Head of caudate nucleus (tissue), 42 donors: ENCODE measurements at regions of chr12 and their contacts with region 1.

Region 1: GRCh38 chr12:50763639-50764285 is at the start of gene ATF1:
- DNase-seq: peak; percentile 81 to 97 (median 93)

Region 2: GRCh38 chr12:50504798-50505385 is 258.9 kb before region 1 on chr12 and contains the start of gene DIP2B:
- intact Hi-C with region 1: loop called (anchors 2 kb)
- DNase-seq: peak; percentile 92 to 99 (median 96)

Region 3: GRCh38 chr12:50992819-50993218 is 229.1 kb after region 1 on chr12:
- intact Hi-C with region 1: loop called (anchors 10 kb)
- DNase-seq: peak in 32 of 42 donors; percentile 11 to 79 (median 45)

Region 4: DNA sequence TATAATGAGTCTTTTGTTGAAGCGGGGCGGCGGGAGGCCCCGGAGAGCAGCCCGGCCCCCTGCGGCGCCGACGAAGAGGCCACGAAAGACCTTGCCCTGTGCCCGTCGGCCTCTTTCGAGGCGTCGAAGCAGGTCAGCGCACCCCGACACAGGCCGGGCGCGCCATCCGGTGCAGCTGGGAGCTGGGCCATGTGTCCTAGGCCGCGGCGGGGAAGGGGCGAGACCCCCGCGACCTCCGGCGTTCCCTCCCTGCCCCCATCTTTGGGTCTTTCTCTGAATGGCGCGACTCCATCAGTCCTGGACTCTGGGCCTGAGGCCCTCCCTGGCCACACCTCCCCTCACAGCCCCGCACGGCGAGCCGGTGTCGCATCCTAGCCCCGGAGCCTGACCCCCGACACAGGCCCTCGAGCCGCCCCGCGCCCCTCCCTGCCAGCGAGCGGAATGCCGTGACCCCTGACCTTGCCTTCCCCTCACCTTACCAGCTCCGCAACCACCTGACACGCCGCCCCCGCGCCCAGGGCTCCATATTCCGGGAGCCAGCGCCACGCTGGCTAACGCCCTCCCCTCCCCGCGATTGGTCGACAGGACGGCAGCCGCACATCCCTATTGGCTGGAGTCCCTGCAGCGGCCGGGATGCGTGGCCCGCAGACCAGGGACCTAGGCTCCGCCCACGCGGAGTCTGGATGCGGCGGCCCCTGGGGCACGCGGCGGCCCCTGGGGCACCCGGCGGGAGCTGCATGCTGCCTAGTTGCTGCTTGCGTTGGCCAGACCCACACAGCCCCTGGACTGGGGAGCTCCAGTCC is 262.3 kb after region 1 on chr12 and contains the start of gene SLC11A2:
- intact Hi-C with region 1: loop called (anchors 10 kb)
- DNase-seq: peak; percentile 94 to 99 (median 98)

Region 5: GRCh38 chr12:51341259-51342007 is 577.7 kb after region 1 on chr12:
- intact Hi-C with region 1: loop called (anchors 10 kb)
- DNase-seq: peak in 41 of 42 donors; percentile 10 to 91 (median 76)